Posterior vena cava (tissue), 2 donors: ENCODE measurements at regions of chr11 and their contacts with region 1.

Region 1: DNA sequence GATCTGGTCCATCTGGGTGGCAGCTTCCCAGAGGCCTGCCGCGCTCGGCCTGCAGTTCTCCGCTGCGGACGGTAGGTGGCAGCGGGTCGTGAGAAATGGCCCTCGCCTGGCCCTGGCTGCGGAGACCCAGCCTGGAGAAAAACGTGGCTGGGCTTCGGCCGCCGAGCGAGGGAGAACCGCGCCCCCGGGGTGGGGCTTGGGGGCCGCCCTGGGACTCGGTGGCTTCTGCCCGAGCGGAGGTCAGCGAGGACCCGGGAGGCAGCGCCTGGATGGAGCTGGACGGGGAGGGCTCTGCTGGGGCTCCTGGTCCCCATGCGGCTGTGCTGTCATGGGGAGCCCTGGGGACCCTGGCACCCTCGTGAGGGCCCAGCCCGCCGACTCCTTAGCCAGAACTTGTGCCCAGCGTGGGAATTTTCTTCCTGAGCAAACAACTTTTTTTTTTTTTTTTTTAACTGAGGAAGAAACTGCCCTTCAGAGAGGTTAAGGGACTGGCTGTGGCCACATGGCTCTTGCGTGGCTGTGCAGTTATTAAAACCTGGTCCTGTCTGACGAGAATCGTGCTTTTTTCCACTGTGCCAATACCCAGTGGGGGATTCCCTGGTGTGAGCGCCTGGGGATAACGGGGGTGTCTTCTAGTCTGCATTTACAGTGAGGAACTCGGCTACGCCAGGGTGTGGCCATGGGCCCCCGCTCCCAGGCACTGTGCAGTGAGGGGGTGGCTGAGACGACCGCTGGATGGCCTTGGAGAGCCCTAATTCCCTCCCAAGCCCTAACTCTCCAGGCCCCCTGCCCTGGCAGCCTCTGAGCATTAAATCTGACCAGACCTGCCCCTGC is 535.6 kb downstream of the INSC start:
- DNase-seq: peak; percentile 98

Region 2: GRCh38 chr11:15819679-15820286 is 169.5 kb after region 1 on chr11:
- intact Hi-C with region 1: loop called in 1 of 2 experiments (anchors 10 kb)
- DNase-seq: peak; percentile 89

Region 3: DNA sequence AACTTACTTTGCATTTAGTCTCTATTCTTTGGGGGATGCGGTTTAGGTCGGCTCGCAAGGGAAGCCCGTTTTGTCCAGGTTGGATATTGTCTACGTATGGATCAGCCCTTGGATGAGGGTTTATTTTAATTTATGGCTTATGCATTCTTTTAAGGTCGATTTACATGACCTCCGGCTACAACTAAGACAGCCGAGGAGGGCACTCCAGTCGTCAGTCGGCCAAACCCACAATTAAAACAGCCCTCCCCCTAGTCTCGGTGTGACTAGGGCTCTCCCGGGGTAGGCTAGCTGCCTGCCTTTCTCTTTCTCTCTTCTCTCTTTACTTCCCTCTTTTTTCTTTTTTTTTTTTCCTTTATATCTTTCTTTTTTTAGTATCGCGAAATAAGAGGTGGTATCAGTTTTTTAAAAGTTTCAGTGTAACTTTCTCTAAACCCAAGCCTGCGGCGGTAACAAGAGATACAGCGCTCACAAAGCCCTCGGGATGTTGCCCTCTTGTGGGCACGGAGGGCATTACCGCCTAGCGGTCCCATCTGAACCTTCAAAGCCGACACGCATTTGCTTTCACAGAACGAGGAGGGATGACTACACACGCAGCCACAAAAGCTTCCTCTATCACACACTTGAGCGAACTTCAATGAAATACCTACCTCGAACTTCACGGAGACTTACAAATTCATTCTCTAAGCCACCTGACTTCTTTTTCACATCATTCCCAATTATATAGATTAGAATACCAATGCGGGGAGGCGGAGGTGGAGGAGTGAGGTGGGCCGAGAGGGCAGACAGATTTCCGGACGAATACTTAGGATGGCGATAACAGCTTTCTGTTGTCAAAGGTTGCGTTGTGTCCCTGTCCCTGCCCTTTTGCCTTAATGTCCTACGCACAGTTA is 955.8 kb after region 1 on chr11:
- intact Hi-C with region 1: loop called (anchors 2 to 10 kb)
- DNase-seq: peak; percentile 97

Region 4: DNA sequence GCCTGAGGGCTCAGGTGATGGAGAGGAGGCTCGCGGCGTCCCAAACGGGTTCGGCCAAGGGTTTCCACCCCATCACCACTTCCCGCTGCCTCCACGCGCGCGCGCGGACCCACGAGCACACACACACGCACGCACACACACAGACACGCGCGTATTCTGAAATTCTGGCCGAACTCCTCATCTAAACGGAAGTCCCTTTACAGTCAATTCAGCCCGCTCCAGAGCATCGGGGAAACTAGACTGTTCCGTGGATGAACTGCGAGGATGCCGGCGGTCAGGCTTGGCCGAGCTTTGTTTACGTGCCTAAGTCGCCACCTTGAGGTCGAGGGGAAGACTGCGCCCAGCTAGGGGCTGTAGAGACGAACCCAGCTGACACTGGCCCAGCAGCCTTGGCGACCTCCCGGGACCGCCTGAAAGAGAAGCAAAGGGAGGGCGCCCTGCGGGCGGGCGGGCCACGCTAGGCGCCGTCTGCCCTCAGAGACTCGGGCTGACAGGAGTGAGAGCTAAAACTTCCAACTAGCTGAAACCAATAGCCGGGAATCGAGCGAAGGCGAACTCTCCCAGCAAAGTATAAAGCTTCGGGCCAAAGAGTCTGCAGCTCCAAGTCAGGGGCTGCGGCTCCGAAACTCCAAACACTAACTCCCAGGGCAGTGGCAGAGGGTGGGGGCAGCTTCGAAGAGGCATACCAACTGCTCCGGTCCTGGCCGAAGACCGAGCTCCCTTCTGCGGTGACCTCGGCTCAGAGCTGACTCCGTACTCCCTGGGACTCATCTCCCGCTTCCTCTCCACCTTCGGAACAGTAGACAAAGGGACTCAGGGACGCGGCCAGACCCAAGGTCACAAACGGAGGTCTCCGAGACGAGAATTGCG is 963.4 kb after region 1 on chr11:
- intact Hi-C with region 1: loop called in 1 of 2 experiments (anchors 10 kb)
- DNase-seq: peak; percentile 96